ENCODE measurements at regions of chr1 and their contacts with region 1.

Region 1: DNA sequence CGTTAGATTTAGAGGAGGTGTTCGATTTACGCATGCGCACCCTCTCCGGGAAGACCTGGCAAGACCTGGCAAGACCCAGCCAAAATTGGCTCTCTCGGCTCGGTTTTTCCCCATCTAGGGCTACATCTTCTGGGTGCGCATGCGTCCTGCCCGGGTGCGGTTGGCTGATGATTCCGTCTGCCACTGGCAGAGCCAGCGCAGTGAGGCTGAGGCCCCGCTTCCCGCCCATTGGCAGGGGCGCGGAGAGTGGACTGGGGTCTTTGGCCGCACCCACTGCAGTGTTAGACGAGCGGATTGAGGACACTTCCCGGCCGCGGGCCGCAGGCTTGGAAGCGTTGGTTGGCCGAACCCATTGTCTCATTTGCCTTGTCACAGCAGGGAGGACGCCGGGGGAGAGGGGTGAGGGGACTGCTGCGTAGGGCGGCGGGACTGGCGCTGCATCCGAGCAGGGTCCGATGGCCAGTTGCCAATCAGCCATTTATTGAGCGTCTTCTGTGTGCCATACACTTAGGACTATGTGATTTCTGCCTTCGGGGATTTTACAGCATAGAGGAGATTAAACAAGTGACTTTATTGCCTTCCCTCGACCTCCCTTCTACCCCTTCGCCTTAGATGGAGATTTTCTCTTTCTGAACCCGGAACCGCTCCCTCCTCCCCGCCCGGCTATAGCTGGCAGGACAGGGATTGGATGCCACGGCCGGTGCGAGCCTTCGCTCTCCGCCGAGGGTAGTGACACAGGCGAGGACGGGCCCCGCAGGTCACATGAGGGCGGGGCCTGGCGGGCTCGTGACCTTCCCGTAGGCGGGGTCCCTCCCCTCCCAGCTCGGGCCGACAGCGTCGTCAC is 43.7 kb downstream of the MEF2D start:
- DNase-seq: peak; percentile 92
- ATAC-seq: peak; percentile 95
- H3K4me3 ChIP-seq: peak overlapping the region; percentile 34; the same call in 1 of the 2 replicates
- H3K27ac ChIP-seq: peak overlapping the region; percentile 87
- H3K4me1 ChIP-seq: peaks cover 8% of the 10 kb centered on the region
- H3K27me3 ChIP-seq: no peaks in the 10 kb centered on the region; a peak in 2 of 4 replicates
- CTCF ChIP-seq: no peak
- EP300 ChIP-seq: no peak; a peak in 1 of 4 replicates
- POLR2A ChIP-seq: peak; percentile 82
- RAD21 ChIP-seq: no peak

Region 2: GRCh38 chr1:156247460-156248322 is 209.2 kb before region 1 on chr1 and contains the start of gene PAQR6:
- CTCF ChIA-PET with region 1: no interaction called
- POLR2A ChIA-PET with region 1: no interaction called
- RAD21 ChIA-PET with region 1: no interaction called
- SMC1A ChIA-PET with region 1: no interaction called
- in situ Hi-C with region 1: no loop called
- intact Hi-C with region 1: no loop called
- DNase-seq: no peak
- ATAC-seq: no peak
- H3K4me3 ChIP-seq: no peak within 1 kb of the TSS
- H3K27ac ChIP-seq: no peak within 1 kb of the TSS
- H3K4me1 ChIP-seq: peaks cover 11% of the 10 kb centered on the region
- H3K27me3 ChIP-seq: no peaks in the 10 kb centered on the region
- CTCF ChIP-seq: no peak
- EP300 ChIP-seq: no peak
- POLR2A ChIP-seq: peak; percentile 53
- RAD21 ChIP-seq: no peak
- polyA plus RNA-seq, gene PAQR6: 0.42 to 0.73 TPM

Region 3: DNA sequence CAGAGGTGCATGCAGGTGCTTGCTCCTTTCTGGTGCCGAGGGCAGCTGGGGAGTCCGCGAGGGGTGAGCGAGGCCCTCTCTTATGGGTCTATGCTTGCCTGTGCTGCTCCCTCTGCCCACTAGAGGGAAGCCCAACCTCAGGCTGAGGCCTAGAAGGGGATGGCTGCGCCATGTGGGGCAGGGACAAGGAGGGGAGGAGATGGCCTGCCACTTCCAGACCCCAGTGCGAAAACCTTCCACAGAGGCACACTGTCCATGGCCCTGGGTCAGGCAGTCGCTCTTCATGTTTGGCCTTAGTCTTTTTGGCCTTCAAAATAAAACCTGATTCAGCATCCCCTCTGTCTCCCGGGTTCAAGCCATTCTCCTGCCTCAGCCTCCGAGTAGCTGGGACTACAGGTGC is 73.8 kb before region 1 on chr1:
- CTCF ChIA-PET with region 1: interaction called, 19 read pairs
- POLR2A ChIA-PET with region 1: no interaction called
- RAD21 ChIA-PET with region 1: interaction called, 18 read pairs
- SMC1A ChIA-PET with region 1: interaction called, 13 read pairs
- in situ Hi-C with region 1: no loop called
- intact Hi-C with region 1: no loop called
- DNase-seq: no peak
- ATAC-seq: peak; percentile 98
- H3K4me3 ChIP-seq: no peak overlapping the region
- H3K27ac ChIP-seq: no peak overlapping the region
- H3K4me1 ChIP-seq: no peaks in the 10 kb centered on the region
- H3K27me3 ChIP-seq: peaks cover 2 to 5% of the 10 kb centered on the region in 2 experiments
- CTCF ChIP-seq: peak; percentile 92 to 98 (median 93)
- EP300 ChIP-seq: no peak
- POLR2A ChIP-seq: no peak
- RAD21 ChIP-seq: peak; percentile 91

Region 4: DNA sequence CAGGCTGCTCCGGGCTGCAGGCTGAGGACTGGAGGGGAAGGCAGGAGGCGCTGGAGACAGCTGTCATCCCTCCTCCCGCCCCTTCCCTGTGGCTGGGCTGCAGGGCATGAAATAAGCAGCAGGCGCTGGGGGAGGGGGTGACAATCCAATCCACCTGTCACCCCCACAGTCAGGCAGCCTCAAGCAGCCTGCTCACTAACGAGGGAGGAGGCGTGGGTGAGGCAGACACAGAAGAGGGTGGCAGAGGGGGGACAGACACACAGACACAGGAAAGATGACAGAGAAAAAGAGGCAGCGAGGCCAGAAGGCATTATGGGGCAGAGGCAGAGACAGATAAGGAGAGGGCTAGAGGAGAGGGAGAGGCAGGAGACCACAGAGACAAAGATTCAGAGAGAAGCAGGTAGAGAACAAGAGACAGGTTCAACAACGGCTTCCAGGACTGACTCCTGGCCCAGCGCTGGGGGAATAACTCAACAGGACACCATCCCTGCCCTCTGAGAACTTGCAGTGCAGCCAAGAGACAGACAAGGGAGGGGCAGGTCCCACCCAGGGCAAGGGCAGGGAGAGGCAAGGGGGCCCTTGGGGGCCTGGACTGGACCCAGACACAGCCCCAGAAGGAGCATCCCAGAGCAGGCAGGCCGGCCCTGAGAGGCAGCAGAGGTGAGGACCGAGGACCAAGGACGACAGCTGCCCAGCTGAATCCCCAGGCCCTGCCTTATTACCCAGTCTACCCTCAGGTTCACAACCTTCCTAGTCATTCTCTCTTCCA is 32.5 kb after region 1 on chr1:
- CTCF ChIA-PET with region 1: interaction called, 25 read pairs
- POLR2A ChIA-PET with region 1: interaction called, 16 read pairs
- RAD21 ChIA-PET with region 1: interaction called, 16 read pairs
- SMC1A ChIA-PET with region 1: interaction called, 8 read pairs
- in situ Hi-C with region 1: no loop called
- intact Hi-C with region 1: no loop called
- DNase-seq: no peak
- ATAC-seq: peak; percentile 16
- H3K4me3 ChIP-seq: peak overlapping the region; percentile 73
- H3K27ac ChIP-seq: peak overlapping the region; percentile 96
- H3K4me1 ChIP-seq: peaks cover 86% of the 10 kb centered on the region
- H3K27me3 ChIP-seq: no peaks in the 10 kb centered on the region
- CTCF ChIP-seq: peak in 1 of 3 experiments; percentile 33; a peak in 1 of 6 replicates
- EP300 ChIP-seq: peak in 1 of 2 experiments; percentile 42; a peak in 2 of 4 replicates
- POLR2A ChIP-seq: peak; percentile 48
- RAD21 ChIP-seq: no peak; the same call in 1 of the 2 replicates

Region 5: GRCh38 chr1:156510709-156511108 is 53.9 kb after region 1 on chr1:
- CTCF ChIA-PET with region 1: interaction called, 15 read pairs
- POLR2A ChIA-PET with region 1: interaction called, 6 read pairs
- RAD21 ChIA-PET with region 1: interaction called, 17 read pairs
- SMC1A ChIA-PET with region 1: interaction called, 10 read pairs
- in situ Hi-C with region 1: no loop called
- intact Hi-C with region 1: no loop called
- DNase-seq: no peak
- ATAC-seq: no peak
- H3K4me3 ChIP-seq: no peak overlapping the region
- H3K27ac ChIP-seq: no peak overlapping the region
- H3K4me1 ChIP-seq: peaks cover 19% of the 10 kb centered on the region
- H3K27me3 ChIP-seq: no peaks in the 10 kb centered on the region
- CTCF ChIP-seq: no peak
- EP300 ChIP-seq: no peak
- POLR2A ChIP-seq: no peak
- RAD21 ChIP-seq: no peak

Region 6: DNA sequence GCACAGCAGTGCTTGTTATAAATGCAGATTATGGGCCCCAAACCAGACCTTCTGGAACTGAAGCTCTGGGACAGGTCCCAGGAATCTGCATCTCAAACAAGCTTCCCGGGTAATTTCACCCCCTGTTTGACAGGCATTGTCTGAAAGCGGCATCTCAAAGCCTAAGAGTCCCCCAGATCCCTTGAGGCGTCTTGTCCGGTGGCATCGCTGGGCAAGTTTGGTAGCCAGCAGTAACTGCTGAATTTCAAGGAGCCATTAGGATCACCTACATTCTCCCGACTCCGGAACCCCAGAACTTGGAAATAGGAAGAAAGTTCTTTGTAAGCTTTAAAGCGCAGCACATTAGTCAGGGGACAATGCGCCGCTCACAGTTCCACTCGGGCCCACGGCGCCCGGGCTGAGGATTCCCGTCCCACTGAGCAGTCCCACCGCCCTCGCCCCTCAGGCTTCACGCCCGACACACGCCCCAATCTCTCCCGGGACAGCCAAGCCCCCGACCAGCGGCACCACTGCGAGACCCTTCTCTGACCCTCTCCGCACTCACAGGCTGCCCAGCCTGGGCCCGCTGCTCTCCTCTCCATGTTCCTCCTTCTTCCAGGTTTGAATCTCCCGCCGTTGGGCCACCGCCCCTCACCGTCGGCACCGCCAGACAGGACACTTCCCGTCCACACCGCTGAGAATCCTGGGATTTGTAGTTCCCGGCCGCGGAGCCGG is 115.3 kb after region 1 on chr1 and contains the start of gene IQGAP3:
- CTCF ChIA-PET with region 1: interaction called, 3 read pairs
- POLR2A ChIA-PET with region 1: interaction called, 5 read pairs
- RAD21 ChIA-PET with region 1: interaction called, 4 read pairs
- SMC1A ChIA-PET with region 1: interaction called, 3 read pairs
- in situ Hi-C with region 1: no loop called
- intact Hi-C with region 1: loop called (anchors 2 kb)
- DNase-seq: peak; percentile 15
- ATAC-seq: peak; percentile 99
- H3K4me3 ChIP-seq: peak within 1 kb of the TSS; percentile 73
- H3K27ac ChIP-seq: no peak within 1 kb of the TSS
- H3K4me1 ChIP-seq: 0 out of 2 replicates have a peak, but pooled peaks cover 3% of the 10 kb centered on the region
- H3K27me3 ChIP-seq: no peaks in the 10 kb centered on the region; a peak in 1 of 4 replicates
- CTCF ChIP-seq: no peak
- EP300 ChIP-seq: no peak
- POLR2A ChIP-seq: no peak
- RAD21 ChIP-seq: no peak
- polyA plus RNA-seq, gene IQGAP3: 1.1 to 1.2 TPM

Region 7: GRCh38 chr1:156591432-156592157 is 134.8 kb after region 1 on chr1 and contains the start of gene NAXE:
- CTCF ChIA-PET with region 1: interaction called, 4 read pairs
- POLR2A ChIA-PET with region 1: interaction called, 4 read pairs
- RAD21 ChIA-PET with region 1: interaction called, 15 read pairs
- SMC1A ChIA-PET with region 1: interaction called, 6 read pairs
- in situ Hi-C with region 1: no loop called
- intact Hi-C with region 1: no loop called
- DNase-seq: no peak
- ATAC-seq: peak; percentile 97
- H3K4me3 ChIP-seq: peak within 1 kb of the TSS; percentile 89
- H3K27ac ChIP-seq: peak within 1 kb of the TSS; percentile 86
- H3K4me1 ChIP-seq: peaks cover 5% of the 10 kb centered on the region
- H3K27me3 ChIP-seq: no peaks in the 10 kb centered on the region
- CTCF ChIP-seq: 0 out of 6 replicates have a peak, but pooled peaks of 1 of the 3 experiments have one; percentile 1
- EP300 ChIP-seq: no peak
- POLR2A ChIP-seq: peak; percentile 91
- RAD21 ChIP-seq: no peak
- polyA plus RNA-seq, gene NAXE: 18.1 to 65.1 TPM

Region 8: GRCh38 chr1:156608036-156608674 is 151.3 kb after region 1 on chr1:
- CTCF ChIA-PET with region 1: interaction called, 11 read pairs
- POLR2A ChIA-PET with region 1: interaction called, 4 read pairs
- RAD21 ChIA-PET with region 1: interaction called, 10 read pairs
- SMC1A ChIA-PET with region 1: interaction called, 13 read pairs
- in situ Hi-C with region 1: loop called (anchors 10 kb)
- intact Hi-C with region 1: loop called (anchors 2 kb)
- DNase-seq: peak; percentile 62
- ATAC-seq: peak; percentile 99
- H3K4me3 ChIP-seq: no peak overlapping the region
- H3K27ac ChIP-seq: no peak overlapping the region
- H3K4me1 ChIP-seq: 0 out of 2 replicates have a peak, but pooled peaks cover 4% of the 10 kb centered on the region
- H3K27me3 ChIP-seq: peaks cover 0 to 3% of the 10 kb centered on the region in 2 experiments; a peak in 2 of 4 replicates
- CTCF ChIP-seq: peak; percentile 75 to 93 (median 78)
- EP300 ChIP-seq: no peak
- POLR2A ChIP-seq: no peak
- RAD21 ChIP-seq: peak; percentile 80

Measured in GM12878 (cell line).